PC-9 (cell line): ENCODE measurements at regions of chr7 and their contacts with region 1.

Region 1: GRCh38 chr7:103704701-103705100 is 258.7 kb upstream of the SLC26A5 start:
- DNase-seq: no peak
- H3K4me3 ChIP-seq: no peak overlapping the region
- H3K27ac ChIP-seq: no peak overlapping the region
- H3K4me1 ChIP-seq: no peaks in the 10 kb centered on the region
- H3K27me3 ChIP-seq: no peaks in the 10 kb centered on the region
- CTCF ChIP-seq: no peak

Region 2: GRCh38 chr7:103805346-103805745 is 100.6 kb after region 1 on chr7:
- CTCF ChIA-PET with region 1: no interaction called
- POLR2A ChIA-PET with region 1: no interaction called
- intact Hi-C with region 1: no loop called
- DNase-seq: no peak
- H3K4me3 ChIP-seq: no peak overlapping the region
- H3K27ac ChIP-seq: no peak overlapping the region
- H3K4me1 ChIP-seq: no peaks in the 10 kb centered on the region
- H3K27me3 ChIP-seq: no peaks in the 10 kb centered on the region
- CTCF ChIP-seq: no peak

Region 3: DNA sequence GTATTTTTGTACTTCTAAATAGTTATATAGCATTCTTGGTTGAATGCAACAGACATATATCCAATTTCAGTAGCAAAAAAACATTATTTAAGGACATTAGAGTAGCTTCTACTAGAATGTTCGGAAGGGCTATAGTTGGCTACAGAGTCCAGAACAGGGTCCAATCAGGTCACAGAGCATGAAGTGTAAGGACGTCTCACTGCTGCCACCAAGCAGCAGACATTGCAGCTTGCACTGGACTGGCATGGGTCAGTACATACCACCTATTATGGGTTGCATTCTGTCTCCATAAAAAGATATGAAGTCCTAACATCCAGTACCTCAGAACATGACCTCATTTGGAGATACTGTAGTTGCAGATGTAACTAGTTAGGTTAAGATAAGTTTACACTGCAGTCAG is 711.0 kb after region 1 on chr7:
- CTCF ChIA-PET with region 1: no interaction called
- POLR2A ChIA-PET with region 1: no interaction called
- intact Hi-C with region 1: loop called (anchors 10 kb)
- DNase-seq: no peak
- H3K4me3 ChIP-seq: no peak overlapping the region
- H3K27ac ChIP-seq: no peak overlapping the region
- H3K4me1 ChIP-seq: no peaks in the 10 kb centered on the region
- H3K27me3 ChIP-seq: peaks cover 28% of the 10 kb centered on the region
- CTCF ChIP-seq: no peak